Activated CD8-positive, alpha-beta memory T cell treated with anti-CD3 and anti-CD28 coated beads, Interleukin-2, amount 10 ng/mL, durations not matched to agents 7 days and 5 days (primary cell): ENCODE measurements at regions of chr4 and their contacts with region 1.

Region 1: DNA sequence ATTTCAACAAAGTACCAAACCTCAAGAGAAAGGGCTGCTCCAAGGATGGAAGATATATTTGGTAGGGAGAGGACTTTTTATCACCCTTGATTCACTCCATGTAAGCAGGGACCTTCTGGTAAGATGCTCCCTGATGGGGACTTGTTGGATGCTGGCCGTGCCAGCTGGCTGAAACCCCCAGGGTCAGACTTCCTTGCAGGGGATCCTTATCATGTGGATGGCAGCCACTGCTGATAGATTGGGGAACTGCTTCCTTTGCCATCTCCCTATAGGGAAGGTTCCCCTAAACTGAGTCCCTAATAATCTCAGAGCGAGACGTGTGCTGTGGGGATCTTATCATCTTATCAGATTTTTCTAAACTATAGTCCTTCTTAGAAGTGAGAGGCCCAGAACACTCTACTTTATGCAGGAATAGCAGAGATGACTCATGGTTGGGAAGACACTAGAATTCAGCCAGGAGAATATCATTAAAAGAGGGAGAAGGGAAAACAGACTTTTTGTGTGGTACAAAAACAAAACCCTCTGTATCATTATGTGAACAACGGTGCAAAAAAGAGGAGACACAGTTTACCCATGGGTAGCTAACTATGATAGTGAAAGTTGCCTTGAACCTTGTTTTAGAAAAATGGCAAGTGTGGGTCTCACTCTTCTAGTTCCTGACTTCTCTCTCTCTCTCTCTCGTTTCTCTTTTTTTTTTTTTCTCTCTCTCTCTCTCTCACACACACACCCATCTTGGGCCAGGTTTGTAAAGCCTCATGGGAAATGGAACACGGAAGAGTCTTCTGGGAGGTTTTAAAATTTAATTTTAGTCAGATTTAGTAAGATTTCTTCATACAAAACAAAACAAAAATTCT is 16.1 kb downstream of the RHOH start:
- DNase-seq: peak; percentile 45
- ATAC-seq: peak; percentile 22
- H3K4me3 Mint-ChIP-seq: peak overlapping the region; percentile 75
- H3K27ac Mint-ChIP-seq: peak overlapping the region; percentile 89
- H3K4me1 Mint-ChIP-seq: peaks cover 85% of the 10 kb centered on the region
- H3K27me3 Mint-ChIP-seq: no peaks in the 10 kb centered on the region

Region 2: DNA sequence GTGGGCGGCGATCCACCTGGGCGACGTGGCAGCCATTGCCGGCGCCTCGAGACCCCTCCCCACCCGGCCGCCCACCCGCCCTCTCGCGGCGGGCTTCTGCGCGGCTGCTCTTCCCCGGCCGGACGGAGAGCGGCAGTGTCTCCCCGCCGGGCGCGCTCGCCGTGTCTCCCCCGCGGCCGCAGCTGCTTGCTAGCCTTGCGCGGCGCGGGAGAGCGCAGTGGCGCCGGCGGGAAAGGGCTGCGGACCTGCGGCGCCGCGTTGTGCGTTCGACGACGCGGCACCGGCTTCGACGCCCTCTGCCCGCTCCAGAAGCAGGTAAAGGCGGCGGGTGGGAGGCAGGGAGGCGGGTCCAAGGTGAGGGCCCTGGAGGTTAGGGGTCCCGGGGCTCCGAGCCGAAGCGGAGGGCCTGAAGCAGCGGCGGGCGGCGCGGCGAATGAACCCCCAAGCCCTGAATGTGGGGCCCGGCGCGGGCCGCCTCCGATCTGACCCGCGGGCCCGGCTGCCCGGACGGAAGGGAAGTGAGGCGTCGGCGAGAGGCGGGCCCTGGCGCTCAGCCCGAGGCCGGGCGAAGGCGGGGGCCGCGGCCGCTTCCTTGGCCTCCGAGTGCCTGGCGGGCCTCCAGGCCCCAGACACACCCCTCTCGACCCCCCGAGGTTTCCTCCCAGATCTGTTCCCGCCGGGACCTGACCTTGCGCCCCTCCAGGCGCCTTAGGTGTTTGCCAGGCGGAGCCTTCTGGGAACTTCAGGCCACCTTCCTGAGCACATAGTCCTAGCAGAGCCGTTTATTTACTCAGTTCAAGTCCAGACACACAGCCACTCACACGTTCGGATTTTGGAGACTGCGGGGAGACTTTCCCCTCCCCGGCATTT is 155.9 kb before region 1 on chr4 and contains the start of gene N4BP2:
- CTCF ChIA-PET with region 1: interaction called, 10 read pairs
- DNase-seq: peak; percentile 81
- ATAC-seq: peak; percentile 65
- H3K4me3 Mint-ChIP-seq: peak within 1 kb of the TSS; percentile 98
- H3K27ac Mint-ChIP-seq: peak within 1 kb of the TSS; percentile 99
- H3K4me1 Mint-ChIP-seq: peaks cover 32% of the 10 kb centered on the region
- H3K27me3 Mint-ChIP-seq: peaks cover 5% of the 10 kb centered on the region
- total RNA-seq, gene N4BP2: 26.5 to 28.4 TPM

Region 3: DNA sequence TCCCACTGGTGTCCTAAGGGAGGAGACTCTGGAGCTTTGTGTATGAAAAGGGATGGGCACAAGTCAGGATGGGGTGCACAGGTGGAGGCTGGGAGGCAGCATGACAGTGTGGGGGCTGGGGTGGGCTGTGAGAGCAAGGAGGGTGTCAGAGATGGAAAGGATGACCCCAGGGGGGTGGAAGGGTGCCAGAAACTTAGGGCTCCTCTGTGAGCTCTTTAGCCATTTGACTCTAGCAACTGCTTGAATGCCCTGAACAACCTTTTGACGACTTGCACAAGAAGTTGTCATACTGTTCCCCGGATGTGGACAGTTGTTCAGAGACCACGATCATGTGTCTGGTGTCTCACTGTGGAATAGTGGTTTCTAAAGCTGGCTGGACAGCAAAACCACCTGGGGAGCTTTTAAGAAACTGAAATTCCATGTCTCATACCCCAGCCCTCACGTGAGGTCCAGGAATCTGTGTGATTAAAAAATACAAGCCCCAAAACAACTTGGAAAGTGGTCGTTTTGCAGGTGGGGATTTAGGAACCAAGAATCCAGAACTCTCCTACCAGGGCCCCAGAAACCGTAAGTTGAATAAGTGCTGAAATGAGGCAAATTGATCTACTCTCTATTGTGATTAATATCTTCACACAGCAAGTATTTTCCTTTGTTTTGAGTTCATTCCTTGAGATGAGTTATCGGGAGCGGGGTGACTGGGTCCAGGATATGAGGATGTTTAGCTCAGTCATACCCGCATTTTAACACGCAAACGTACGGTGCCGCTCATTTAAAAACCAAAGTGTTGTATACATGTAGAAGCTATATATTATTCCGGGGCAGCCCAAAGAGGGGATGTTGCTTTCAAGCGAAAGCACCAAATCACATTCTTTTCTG is 12.7 kb before region 1 on chr4:
- CTCF ChIA-PET with region 1: interaction called, 20 read pairs
- DNase-seq: peak; percentile 94
- ATAC-seq: peak; percentile 52
- H3K4me3 Mint-ChIP-seq: peak overlapping the region; percentile 98
- H3K27ac Mint-ChIP-seq: peak overlapping the region; percentile 99
- H3K4me1 Mint-ChIP-seq: peaks cover 51% of the 10 kb centered on the region
- H3K27me3 Mint-ChIP-seq: no peaks in the 10 kb centered on the region

Region 4: GRCh38 chr4:40228497-40229365 is 15.8 kb after region 1 on chr4:
- CTCF ChIA-PET with region 1: interaction called, 22 read pairs
- DNase-seq: peak; percentile 62
- ATAC-seq: peak; percentile 5
- H3K4me3 Mint-ChIP-seq: peak overlapping the region; percentile 58
- H3K27ac Mint-ChIP-seq: peak overlapping the region; percentile 93
- H3K4me1 Mint-ChIP-seq: peaks cover 95% of the 10 kb centered on the region
- H3K27me3 Mint-ChIP-seq: no peaks in the 10 kb centered on the region